HEK293 (cell line): ENCODE measurements at regions of chr13 and their contacts with region 1.

Region 1: DNA sequence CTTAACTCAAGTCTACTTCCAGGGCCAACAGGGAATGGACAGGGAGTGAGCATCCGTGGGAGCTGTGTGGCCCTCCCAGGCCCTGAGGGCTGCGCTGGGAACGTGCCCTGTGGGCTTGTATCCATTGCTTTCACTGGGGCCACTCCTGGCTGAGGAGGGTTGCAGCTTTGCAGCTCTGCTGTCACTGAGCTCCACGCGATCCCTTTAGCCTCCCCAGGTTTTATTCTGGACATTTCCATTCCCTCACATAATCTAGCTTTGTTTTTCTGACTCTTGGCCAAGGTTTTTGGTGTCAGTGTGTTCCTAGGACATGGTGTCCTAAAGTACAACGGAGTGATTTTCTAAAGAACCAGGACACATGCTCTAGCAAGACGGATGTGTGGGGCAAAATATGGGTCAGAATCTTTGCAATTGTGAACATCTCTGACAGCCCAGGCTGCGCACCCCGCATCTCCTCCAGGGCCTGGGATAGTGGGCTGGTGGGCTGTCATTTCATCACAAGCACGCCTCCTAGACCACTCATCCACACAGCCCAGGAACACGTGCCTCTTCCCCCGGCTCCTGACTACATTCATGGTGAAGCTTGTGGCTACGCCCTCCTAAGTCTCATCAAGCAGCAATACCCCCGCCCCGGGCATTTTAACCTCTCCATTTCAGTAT is 28.0 kb downstream of the GGACT start:
- H3K4me3 ChIP-seq: no peak overlapping the region
- H3K27ac ChIP-seq: no peak overlapping the region
- H3K4me1 ChIP-seq: no peaks in the 10 kb centered on the region
- CTCF ChIP-seq: no peak

Region 2: GRCh38 chr13:100573121-100573520 is 12.5 kb after region 1 on chr13:
- CTCF ChIA-PET with region 1: interaction called, 13 read pairs
- POLR2A ChIA-PET with region 1: no interaction called
- H3K4me3 ChIP-seq: no peak overlapping the region
- H3K27ac ChIP-seq: no peak overlapping the region
- H3K4me1 ChIP-seq: no peaks in the 10 kb centered on the region
- CTCF ChIP-seq: no peak